Activated CD4-positive, alpha-beta T cell treated with anti-CD3 and anti-CD28 coated beads for 36 hours (primary cell): ENCODE measurements at regions of chr12 and their contacts with region 1.

Region 1: GRCh38 chr12:89756585-89757321 is 48.1 kb upstream of the ATP2B1 start:
- DNase-seq: peak; percentile 28
- ATAC-seq: peak; percentile 94
- H3K4me3 Mint-ChIP-seq: peak overlapping the region; percentile 22
- H3K27ac Mint-ChIP-seq: peak overlapping the region; percentile 72
- H3K4me1 Mint-ChIP-seq: peaks cover 37% of the 10 kb centered on the region
- H3K27me3 Mint-ChIP-seq: no peaks in the 10 kb centered on the region

Region 2: GRCh38 chr12:89494411-89495231 is 262.1 kb before region 1 on chr12:
- CTCF ChIA-PET with region 1: no interaction called
- POLR2A ChIA-PET with region 1: no interaction called
- intact Hi-C with region 1: loop called in 1 of 2 experiments (anchors 1 kb)
- DNase-seq: peak; percentile 72
- ATAC-seq: peak; percentile 90
- H3K4me3 Mint-ChIP-seq: peak overlapping the region; percentile 28
- H3K27ac Mint-ChIP-seq: peak overlapping the region; percentile 92
- H3K4me1 Mint-ChIP-seq: peaks cover 27% of the 10 kb centered on the region
- H3K27me3 Mint-ChIP-seq: no peaks in the 10 kb centered on the region

Region 3: DNA sequence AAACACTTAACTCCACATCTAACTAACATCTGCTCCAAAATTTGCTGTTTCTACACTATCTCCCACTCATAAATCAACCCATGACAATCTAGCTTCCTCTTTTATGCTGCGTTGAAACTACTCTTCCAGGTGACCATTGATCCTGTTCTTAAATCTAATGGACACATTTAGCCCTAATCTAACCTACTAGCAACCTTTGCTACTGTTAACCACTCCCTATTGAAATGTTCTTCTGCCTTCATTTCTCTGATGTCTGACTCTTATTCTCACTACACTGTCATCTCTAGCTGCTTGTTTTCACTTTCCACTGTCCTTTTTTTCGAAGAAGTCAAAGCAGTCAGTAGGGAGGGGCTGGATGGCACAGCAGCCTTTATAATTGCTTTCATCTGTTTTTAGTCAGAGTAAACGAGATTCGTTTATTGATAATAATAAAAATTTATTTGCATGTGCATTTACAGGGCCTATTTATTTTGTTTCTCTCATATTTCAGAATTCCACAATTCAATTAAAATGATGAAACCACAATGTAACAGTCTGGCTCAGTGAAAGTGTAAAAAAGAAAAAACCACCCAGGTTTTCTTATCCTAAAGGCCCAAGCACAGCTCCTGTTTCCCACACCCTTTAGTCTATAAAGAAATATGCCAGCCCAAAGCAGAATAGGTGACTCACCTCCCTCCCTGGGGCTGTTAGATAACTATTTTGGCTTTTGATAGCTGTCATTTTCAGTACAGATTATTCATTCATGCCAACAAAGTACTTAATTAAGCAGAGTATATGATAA is 93.0 kb before region 1 on chr12:
- CTCF ChIA-PET with region 1: no interaction called
- POLR2A ChIA-PET with region 1: no interaction called
- intact Hi-C with region 1: loop called (anchors 5 kb)
- DNase-seq: peak; percentile 32
- ATAC-seq: peak; percentile 90
- H3K4me3 Mint-ChIP-seq: peak overlapping the region; percentile 30
- H3K27ac Mint-ChIP-seq: peak overlapping the region; percentile 69
- H3K4me1 Mint-ChIP-seq: peaks cover 72% of the 10 kb centered on the region
- H3K27me3 Mint-ChIP-seq: no peaks in the 10 kb centered on the region

Region 4: DNA sequence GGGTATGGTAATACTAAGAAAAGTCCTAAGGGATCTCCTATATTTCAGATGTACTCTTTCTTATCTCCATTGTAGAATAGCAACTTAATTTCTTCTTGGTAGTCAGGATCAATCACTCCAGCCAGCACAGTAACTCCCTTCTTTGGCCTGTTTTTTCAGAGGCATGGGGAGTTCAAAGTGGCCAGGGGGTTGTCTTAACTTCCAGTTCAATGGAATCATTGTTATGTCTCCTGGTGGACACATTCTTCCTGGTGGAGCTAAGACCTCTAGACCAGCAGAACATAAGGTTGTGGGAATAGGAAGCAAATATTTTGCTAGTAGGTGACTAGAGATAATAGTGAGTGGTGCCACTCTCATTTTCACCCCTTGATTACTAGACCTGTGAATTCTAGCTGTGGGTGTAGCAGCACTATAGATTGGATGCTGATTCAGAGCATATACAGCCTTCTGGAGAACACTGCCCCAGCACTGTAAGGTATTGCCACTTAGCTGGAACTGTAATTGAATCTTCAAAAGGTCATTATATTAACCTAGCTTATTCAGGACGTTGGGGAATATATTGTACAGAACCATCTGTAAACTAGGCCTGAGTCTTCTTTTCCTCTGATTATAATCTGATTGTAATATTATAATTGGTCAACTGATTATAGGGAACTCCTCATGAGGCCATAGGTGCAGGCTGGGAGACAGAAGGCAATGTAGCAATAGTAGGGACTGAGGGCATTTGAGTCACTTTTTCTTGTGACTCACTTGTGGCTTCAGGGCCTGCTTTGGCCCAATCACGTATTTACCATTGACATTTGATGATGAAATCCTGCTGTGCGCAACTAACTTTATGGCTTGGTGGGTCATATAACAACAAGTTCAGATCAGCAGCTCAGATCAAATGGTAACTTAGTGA is 12.1 kb after region 1 on chr12:
- CTCF ChIA-PET with region 1: no interaction called
- POLR2A ChIA-PET with region 1: no interaction called
- intact Hi-C with region 1: loop called (anchors 1 kb)
- DNase-seq: peak; percentile 42
- ATAC-seq: peak; percentile 87
- H3K4me3 Mint-ChIP-seq: no peak overlapping the region
- H3K27ac Mint-ChIP-seq: peak overlapping the region; percentile 18
- H3K4me1 Mint-ChIP-seq: peaks cover 21% of the 10 kb centered on the region
- H3K27me3 Mint-ChIP-seq: no peaks in the 10 kb centered on the region

Region 5: GRCh38 chr12:89825591-89826449 is 69.1 kb after region 1 on chr12:
- CTCF ChIA-PET with region 1: no interaction called
- POLR2A ChIA-PET with region 1: no interaction called
- intact Hi-C with region 1: no loop called
- DNase-seq: no peak
- ATAC-seq: no peak
- H3K4me3 Mint-ChIP-seq: no peak overlapping the region
- H3K27ac Mint-ChIP-seq: no peak overlapping the region
- H3K4me1 Mint-ChIP-seq: peaks cover 13% of the 10 kb centered on the region
- H3K27me3 Mint-ChIP-seq: no peaks in the 10 kb centered on the region

Region 6: DNA sequence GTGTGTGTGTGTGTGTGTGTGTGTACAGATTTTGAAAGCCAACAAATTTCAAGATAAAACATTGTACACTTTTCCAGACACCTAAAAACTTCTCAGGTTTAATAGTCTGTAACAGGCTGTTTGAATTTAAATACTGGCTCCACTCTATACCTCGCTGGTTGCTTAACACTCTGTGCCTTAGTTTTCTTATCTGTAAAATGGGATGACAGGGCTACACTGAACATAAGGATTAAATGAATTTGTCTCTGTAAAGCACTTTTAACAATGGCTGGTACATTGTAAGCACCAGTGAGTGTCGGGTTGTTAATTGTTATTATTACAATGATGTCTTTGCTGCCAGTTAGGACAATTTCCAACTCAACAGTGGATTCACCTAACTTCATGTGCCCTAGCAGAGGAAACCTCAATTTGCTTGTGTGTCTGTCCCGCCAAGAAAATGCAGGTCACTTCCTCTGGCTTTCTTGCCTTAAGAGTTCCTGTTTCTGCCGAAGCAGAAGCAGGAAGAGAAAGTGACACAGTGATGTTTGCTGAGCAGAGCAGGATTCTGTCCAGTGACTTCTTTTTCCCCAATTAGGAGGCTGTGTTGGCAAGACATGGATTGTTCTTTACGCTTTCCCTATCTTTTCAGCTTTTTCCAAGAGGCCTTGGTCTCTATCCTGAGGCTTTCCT is 105.9 kb after region 1 on chr12:
- CTCF ChIA-PET with region 1: no interaction called
- POLR2A ChIA-PET with region 1: interaction called, 4 read pairs
- intact Hi-C with region 1: loop called (anchors 2 to 5 kb)
- DNase-seq: peak; percentile 45
- ATAC-seq: peak; percentile 40
- H3K4me3 Mint-ChIP-seq: peak overlapping the region; percentile 70
- H3K27ac Mint-ChIP-seq: peak overlapping the region; percentile 98
- H3K4me1 Mint-ChIP-seq: peaks cover 64% of the 10 kb centered on the region
- H3K27me3 Mint-ChIP-seq: no peaks in the 10 kb centered on the region

Region 7: GRCh38 chr12:89882050-89882449 is 125.3 kb after region 1 on chr12:
- CTCF ChIA-PET with region 1: no interaction called
- POLR2A ChIA-PET with region 1: no interaction called
- intact Hi-C with region 1: loop called (anchors 1 kb)
- DNase-seq: peak; percentile 45
- ATAC-seq: peak; percentile 67
- H3K4me3 Mint-ChIP-seq: no peak overlapping the region
- H3K27ac Mint-ChIP-seq: peak overlapping the region; percentile 83
- H3K4me1 Mint-ChIP-seq: peaks cover 38% of the 10 kb centered on the region
- H3K27me3 Mint-ChIP-seq: no peaks in the 10 kb centered on the region

Region 8: DNA sequence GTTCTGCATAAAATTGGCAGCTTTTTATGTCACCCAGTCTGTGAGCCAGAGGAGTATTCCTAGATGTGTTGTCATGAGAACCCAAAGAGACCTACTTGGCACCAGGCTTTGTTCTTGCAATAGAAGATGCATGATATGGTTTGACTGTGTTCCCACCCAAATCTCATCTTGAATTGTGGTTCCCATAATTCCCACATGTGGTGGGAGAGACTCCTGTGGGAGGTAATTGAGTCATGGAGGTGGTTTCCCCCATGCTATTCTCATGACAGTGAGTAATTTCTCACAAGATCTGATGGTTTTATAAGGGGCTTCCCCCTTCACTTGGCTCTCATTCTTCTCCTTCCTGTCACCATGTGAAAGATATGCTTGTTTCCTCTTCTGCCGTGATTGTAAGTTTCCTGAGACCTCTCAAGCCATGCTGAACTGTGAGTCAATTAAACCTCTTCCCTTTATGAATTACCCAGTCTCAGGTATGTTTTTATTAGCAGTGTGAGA is 523.9 kb after region 1 on chr12:
- CTCF ChIA-PET with region 1: no interaction called
- POLR2A ChIA-PET with region 1: no interaction called
- intact Hi-C with region 1: loop called (anchors 1 to 2 kb)
- DNase-seq: peak; percentile 33
- ATAC-seq: peak; percentile 74
- H3K4me3 Mint-ChIP-seq: no peak overlapping the region
- H3K27ac Mint-ChIP-seq: peak overlapping the region; percentile 11
- H3K4me1 Mint-ChIP-seq: peaks cover 28% of the 10 kb centered on the region
- H3K27me3 Mint-ChIP-seq: peaks cover 16% of the 10 kb centered on the region